A673 (cell line): ENCODE measurements at regions of chr10 and their contacts with region 1.

Region 1: GRCh38 chr10:93495654-93496321 is 624 bp upstream of the CEP55 start:
- DNase-seq: peak; percentile 71
- H3K4me3 ChIP-seq: peak overlapping the region; percentile 76
- H3K27ac ChIP-seq: peak overlapping the region; percentile 80
- H3K4me1 ChIP-seq: peaks cover 5% of the 10 kb centered on the region
- H3K27me3 ChIP-seq: no peaks in the 10 kb centered on the region
- CTCF ChIP-seq: no peak

Region 2: DNA sequence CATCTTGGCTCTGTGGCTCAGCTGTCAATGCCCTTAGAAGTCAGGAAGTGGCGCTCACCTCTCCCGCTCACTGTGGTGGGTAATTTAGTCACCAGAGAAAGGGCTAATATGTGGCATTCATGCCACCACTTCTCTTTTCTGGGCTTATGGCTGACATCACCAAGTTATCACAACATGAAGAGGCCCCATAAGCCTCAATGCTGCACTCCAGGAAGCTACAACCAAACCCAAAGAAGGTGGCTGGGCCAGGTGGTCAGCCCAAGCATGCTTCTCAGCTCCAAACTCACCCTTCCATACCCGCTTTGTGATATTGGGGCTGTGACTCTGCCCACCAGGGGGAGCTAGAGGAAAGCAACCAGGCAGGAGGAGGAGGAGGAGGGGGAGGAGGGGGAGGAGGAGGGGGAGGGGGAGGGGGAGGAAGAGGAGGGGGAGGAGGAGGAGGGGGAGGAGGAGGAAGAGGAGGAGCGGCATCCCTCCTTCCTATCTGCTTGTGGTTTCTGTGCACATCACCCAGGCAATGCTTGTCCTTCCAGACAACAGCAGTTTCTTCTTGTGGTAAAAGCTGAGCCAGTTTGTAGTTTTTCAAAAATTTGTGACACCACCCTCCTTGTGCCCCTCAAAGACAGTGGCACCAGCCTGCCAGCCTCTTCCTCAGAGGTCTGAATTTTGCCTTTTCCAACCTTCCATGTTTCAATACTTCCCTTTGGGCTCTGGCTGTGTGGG is 380.0 kb before region 1 on chr10:
- CTCF ChIA-PET with region 1: interaction called, 10 read pairs
- POLR2A ChIA-PET with region 1: no interaction called
- intact Hi-C with region 1: no loop called
- DNase-seq: peak; percentile 76
- H3K4me3 ChIP-seq: no peak overlapping the region
- H3K27ac ChIP-seq: no peak overlapping the region
- H3K4me1 ChIP-seq: no peaks in the 10 kb centered on the region
- H3K27me3 ChIP-seq: peaks cover 7% of the 10 kb centered on the region
- CTCF ChIP-seq: peak; percentile 60

Region 3: DNA sequence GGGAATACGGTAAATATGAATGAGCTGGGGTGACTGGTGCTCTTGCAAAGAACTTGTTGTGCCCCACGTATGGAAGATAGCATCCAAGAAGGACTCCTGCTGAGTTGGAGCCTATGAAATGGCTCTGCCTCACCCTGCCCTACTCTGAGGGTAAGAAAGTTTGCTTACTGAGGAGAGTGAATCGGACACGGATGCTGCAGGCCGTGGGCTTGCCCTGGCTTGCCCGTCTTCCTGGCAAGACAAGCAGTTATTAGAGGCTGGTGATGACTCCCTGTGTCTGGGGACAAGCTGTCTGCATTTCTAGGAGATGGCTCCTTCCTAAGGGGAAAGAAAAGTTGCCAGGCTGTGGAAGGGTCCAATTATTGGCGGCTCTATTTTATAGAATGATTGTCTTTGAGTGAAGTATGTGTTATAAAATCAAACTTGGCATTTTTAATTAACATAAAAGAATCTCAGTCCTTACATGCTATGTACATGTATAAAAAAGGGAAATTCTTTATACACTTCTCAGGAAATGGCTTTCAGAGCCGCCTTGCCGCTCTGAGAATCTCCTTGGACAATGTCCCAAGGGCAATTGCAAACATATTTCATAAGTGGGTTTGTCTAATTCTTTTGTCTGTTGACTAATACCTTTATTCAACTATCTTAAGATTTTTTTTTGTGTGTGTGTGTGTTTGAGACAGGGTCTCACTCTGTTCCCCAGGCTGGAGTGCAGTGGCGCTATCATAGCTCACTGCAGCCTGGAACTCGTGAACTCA is 357.5 kb before region 1 on chr10:
- CTCF ChIA-PET with region 1: no interaction called
- POLR2A ChIA-PET with region 1: no interaction called
- intact Hi-C with region 1: no loop called
- DNase-seq: peak; percentile 12
- H3K4me3 ChIP-seq: no peak overlapping the region
- H3K27ac ChIP-seq: no peak overlapping the region
- H3K4me1 ChIP-seq: no peaks in the 10 kb centered on the region
- H3K27me3 ChIP-seq: no peaks in the 10 kb centered on the region
- CTCF ChIP-seq: no peak

Region 4: GRCh38 chr10:93420091-93420490 is 75.7 kb before region 1 on chr10:
- CTCF ChIA-PET with region 1: no interaction called
- POLR2A ChIA-PET with region 1: interaction called, 14 read pairs
- intact Hi-C with region 1: no loop called
- DNase-seq: no peak
- H3K4me3 ChIP-seq: no peak overlapping the region
- H3K27ac ChIP-seq: no peak overlapping the region
- H3K4me1 ChIP-seq: no peaks in the 10 kb centered on the region
- H3K27me3 ChIP-seq: no peaks in the 10 kb centered on the region
- CTCF ChIP-seq: no peak